AG04449 (cell line): ENCODE measurements at regions of chr17 and their contacts with region 1.

Region 1: DNA sequence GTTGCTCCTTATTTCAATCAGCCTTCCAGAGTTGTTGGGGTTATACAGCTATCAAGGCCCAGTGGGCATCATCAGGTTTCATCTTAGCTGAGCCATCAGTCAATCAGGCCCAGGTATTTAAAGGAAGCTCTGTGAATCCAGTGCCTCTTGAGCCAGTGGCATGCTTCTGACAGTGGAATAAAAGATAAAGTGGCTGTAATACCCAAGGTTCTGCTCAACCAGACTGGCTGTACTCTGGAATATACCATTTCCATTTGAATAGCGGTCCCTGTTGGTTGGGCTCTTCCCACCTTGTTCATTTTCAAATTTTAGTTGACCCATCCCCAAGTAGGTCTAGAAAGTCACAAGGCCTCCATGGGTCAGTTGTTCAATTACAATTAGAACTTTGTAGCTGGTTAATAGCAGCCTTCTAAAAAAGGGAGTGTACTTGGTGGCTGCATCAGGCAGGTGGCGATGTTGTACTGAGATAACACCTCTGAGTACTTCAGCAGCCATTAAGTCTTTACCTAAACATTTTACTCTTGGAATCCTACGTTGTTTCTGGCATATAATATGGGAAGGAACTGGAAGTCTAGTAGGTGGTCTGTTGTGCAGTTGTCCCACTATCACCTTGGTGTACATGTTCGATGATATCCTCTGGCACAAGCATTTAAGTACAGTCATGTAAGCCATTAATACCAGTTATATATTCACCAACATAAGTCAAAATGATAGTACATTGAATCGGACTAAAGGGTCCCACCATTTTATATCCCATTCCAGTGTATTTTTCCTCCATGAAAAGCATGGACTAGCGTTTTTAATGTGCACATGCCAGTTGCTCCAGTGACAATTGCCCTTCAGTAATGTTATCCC is 294.1 kb downstream of the BCAS3 start:
- DNase-seq: peak; percentile 14
- H3K4me3 ChIP-seq: no peak overlapping the region
- CTCF ChIP-seq: peak; percentile 71

Region 2: DNA sequence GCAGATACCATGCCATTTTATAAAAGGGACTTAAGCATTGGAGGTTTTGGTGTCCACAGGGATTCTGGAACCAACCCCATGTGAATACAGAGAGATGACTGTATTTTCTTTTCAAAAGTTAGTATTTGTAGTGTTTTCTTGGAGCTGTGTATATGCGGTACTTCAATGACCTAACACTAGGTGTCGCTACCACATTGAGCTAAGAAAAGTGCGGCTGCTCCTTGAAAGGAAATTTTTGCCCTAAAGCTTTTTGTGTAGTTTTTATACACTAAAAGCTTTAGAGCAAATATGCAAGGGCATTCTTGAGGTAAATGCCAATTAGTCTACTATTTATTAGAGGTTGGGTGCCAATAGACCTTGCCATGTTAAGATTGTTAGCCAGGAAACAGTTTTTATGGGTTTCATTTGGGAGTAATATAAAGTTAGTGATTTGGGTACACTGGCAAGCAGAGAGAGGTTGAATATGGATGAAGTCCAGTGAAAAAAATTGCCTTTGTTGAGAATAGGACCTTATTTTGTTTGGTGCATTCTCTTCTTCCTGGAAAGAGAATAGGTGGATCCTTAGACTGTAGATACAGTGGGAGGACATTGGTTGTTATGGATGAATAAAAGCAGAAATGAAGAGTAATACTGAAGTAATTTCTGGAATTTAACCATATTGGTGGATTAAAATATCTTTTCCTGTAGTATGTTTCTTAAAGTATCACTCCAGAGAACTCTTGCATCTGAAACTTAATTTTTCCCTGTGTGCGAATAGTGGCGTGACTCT is 250.8 kb before region 1 on chr17:
- CTCF ChIA-PET with region 1: interaction called, 11 read pairs
- POLR2A ChIA-PET with region 1: no interaction called
- DNase-seq: peak; percentile 37
- H3K4me3 ChIP-seq: no peak overlapping the region
- CTCF ChIP-seq: peak; percentile 74

Region 3: DNA sequence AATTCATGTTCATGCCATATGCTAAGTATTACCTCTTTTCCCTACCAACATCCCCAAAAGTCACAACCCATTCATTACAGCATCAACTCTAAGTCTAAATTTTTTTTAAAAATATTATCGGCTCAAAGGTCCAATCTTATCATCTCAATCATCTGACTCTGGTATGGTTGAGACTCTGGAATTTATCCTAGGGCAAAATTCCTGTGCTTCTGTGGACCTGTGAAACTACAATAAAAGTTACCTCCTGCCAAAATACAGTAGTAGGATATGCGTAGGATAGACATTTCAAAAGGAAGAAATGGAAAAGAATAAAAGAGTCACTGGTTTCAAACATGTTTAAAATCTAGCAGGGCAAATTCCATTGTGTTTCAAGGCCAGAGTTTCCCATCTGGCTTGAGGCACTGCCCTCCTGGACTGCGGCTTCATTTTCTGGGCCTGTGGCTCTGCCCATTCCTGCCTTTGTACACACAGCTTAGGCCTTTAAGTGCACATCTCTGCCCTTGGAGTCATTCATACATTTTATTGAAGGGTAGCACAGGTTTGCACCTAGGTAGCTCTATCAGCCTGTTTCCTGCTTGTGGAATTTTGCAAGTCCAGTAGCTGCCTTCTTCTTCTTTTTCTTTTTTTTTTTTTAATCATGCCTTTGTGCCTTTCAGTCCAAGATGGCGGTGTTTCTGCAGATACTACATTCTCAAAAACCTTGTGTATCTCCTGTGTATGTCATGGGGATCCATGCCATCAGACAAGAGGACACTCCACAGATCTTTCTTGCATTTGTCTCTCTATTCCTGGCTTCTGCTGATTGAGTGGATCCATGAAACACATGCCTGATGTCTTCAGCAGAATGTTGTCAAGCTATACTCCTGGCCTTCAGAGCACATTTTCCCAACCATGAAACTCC is 11.3 kb before region 1 on chr17:
- CTCF ChIA-PET with region 1: interaction called, 24 read pairs
- POLR2A ChIA-PET with region 1: no interaction called
- DNase-seq: no peak
- H3K4me3 ChIP-seq: no peak overlapping the region
- CTCF ChIP-seq: no peak

Region 4: DNA sequence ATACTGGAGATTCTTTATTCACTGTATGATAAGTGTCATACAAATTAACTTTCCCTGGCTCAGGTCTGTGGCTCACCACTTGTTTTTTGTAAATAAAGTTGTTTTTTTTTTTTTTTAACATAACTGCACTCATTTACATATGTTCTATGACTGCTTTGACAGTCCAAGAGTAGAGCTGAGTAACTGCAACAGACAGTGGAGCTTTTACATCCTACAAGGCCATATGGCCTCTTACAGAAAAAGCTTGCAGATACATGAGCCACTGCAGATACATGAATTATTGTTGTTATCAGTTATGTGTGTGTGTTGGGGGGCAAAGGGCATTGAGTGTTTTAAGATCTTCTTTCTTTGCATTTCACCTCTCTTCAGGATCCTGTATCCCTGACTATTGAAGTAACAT is 17.6 kb after region 1 on chr17:
- CTCF ChIA-PET with region 1: interaction called, 17 read pairs
- POLR2A ChIA-PET with region 1: no interaction called
- DNase-seq: no peak
- H3K4me3 ChIP-seq: no peak overlapping the region
- CTCF ChIP-seq: no peak

Region 5: DNA sequence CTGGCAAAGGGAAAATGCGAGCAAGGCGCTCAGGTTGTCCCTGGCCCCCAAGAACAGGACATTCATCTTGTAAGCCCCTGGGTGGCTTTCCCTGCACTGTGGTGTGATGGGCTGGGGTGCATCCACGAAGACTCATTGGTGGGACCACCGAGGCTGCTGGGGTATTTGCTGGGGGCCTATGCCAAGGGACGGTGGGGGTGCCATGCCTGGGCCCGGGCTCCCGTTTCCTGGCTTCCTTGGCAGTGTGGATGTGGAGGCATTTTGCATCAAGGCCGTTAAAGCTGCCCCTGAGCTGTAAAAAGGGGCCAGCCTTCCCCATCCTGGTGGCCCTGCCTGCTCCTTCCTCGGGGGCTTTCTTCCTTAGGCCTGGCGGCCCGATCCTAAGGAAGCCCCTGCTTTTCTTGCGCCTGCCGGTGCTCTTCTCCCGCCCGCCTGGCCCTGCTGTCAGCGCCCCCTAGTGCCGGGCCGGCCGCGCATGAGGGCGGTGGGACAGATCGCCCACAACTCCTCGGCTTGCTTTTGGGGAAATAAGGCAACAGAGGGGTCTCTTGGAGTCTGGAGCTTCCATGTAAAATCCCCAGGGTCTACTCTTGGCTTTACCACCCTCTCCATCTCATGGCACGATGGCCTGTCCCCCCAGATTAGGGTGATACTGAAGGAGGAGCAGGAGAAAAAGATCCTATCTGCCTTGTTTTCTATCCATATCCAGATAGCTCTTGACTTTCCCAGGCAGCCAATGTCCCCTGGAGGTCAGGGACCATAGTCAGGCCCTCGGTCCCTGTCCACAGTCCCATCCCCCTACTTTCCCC is 418.1 kb after region 1 on chr17:
- CTCF ChIA-PET with region 1: interaction called, 17 read pairs
- POLR2A ChIA-PET with region 1: no interaction called
- DNase-seq: no peak
- H3K4me3 ChIP-seq: no peak overlapping the region
- CTCF ChIP-seq: peak; percentile 97